ENCODE measurements at regions of chr14 and their contacts with region 1.

Region 1: GRCh38 chr14:73785873-73786695 is 65.5 kb upstream of the PTGR2 start:
- DNase-seq: peak; percentile 86
- ATAC-seq: peak; percentile 75

Region 2: DNA sequence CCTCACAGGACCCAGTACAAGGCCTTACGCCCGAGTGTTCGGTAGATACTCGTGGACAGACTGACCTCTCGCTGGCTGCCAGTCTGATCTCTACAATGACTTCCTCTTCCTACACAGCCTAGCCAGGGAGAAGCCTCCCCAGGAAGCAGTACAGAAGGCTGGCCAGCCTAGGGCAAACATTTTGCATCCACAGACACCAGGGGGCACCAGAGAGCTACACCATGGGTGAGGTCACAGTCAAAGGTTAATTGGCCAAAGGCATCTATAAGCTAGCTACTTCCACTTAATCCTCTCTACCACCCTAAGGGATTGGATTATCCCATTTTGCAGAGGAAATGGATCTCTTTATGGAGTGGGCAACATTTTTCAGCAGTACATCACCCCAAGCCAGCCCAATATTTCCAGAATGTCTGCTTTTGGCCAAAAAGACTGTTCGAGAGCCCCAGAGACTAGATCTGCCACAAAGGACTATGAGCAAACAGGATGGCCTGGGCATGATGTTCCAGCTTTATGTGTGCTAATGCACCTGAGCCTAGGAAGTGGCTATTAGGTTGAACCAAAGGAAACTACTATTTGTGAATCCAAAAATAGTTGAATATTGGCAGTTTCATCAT is 57.3 kb before region 1 on chr14:
- intact Hi-C with region 1: loop called (anchors 10 kb)
- DNase-seq: peak; percentile 91
- ATAC-seq: peak; percentile 75

Region 3: GRCh38 chr14:73753959-73754882 is 31.9 kb before region 1 on chr14:
- intact Hi-C with region 1: loop called (anchors 5 kb)
- DNase-seq: no peak
- ATAC-seq: peak; percentile 42

Region 4: GRCh38 chr14:73977600-73978295 is 191.7 kb after region 1 on chr14:
- intact Hi-C with region 1: no loop called
- DNase-seq: no peak
- ATAC-seq: no peak

Measured in Right ventricle myocardium superior (tissue), 1 donor.